Activated CD4-positive, alpha-beta T cell treated with anti-CD3 and anti-CD28 coated beads for 36 hours (primary cell): ENCODE measurements at regions of chr10 and their contacts with region 1.

Region 1: GRCh38 chr10:69957886-69958555 is 94.6 kb upstream of the MACROH2A2 start:
- DNase-seq: peak; percentile 34
- ATAC-seq: peak; percentile 72
- H3K4me3 Mint-ChIP-seq: no peak overlapping the region
- H3K27ac Mint-ChIP-seq: no peak overlapping the region
- H3K4me1 Mint-ChIP-seq: no peaks in the 10 kb centered on the region
- H3K27me3 Mint-ChIP-seq: peaks cover 3% of the 10 kb centered on the region

Region 2: GRCh38 chr10:69639291-69640195 is 318.5 kb before region 1 on chr10:
- CTCF ChIA-PET with region 1: no interaction called
- POLR2A ChIA-PET with region 1: no interaction called
- intact Hi-C with region 1: loop called in 1 of 2 experiments (anchors 5 kb)
- DNase-seq: peak; percentile 81
- ATAC-seq: peak; percentile 76
- H3K4me3 Mint-ChIP-seq: no peak overlapping the region
- H3K27ac Mint-ChIP-seq: no peak overlapping the region
- H3K4me1 Mint-ChIP-seq: no peaks in the 10 kb centered on the region
- H3K27me3 Mint-ChIP-seq: no peaks in the 10 kb centered on the region

Region 3: GRCh38 chr10:69974551-69975155 is 16.6 kb after region 1 on chr10:
- CTCF ChIA-PET with region 1: interaction called, 31 read pairs
- POLR2A ChIA-PET with region 1: no interaction called
- intact Hi-C with region 1: no loop called
- DNase-seq: no peak
- ATAC-seq: no peak
- H3K4me3 Mint-ChIP-seq: no peak overlapping the region
- H3K27ac Mint-ChIP-seq: no peak overlapping the region
- H3K4me1 Mint-ChIP-seq: no peaks in the 10 kb centered on the region
- H3K27me3 Mint-ChIP-seq: peaks cover 26% of the 10 kb centered on the region

Region 4: DNA sequence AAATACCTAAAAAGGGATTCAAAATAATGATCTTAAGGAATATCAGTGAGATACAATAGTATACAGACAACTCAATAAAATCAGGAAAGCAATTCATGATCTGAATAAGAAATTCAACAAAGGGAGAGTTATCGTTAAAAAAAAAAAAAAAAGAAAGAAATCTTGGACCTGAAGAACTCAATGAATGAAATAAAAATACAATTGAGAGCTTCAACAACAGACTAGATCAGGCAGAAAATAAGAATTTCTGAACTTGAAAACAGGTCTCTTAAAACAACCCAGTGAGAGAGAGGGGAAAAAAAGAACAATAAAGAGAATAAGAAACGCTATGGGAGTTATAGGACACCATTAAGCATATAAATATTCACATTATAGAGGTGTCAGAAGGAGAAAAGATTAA is 22.7 kb after region 1 on chr10:
- CTCF ChIA-PET with region 1: interaction called, 31 read pairs
- POLR2A ChIA-PET with region 1: no interaction called
- intact Hi-C with region 1: no loop called
- DNase-seq: no peak
- ATAC-seq: no peak
- H3K4me3 Mint-ChIP-seq: no peak overlapping the region
- H3K27ac Mint-ChIP-seq: no peak overlapping the region
- H3K4me1 Mint-ChIP-seq: no peaks in the 10 kb centered on the region
- H3K27me3 Mint-ChIP-seq: peaks cover 27% of the 10 kb centered on the region

Region 5: DNA sequence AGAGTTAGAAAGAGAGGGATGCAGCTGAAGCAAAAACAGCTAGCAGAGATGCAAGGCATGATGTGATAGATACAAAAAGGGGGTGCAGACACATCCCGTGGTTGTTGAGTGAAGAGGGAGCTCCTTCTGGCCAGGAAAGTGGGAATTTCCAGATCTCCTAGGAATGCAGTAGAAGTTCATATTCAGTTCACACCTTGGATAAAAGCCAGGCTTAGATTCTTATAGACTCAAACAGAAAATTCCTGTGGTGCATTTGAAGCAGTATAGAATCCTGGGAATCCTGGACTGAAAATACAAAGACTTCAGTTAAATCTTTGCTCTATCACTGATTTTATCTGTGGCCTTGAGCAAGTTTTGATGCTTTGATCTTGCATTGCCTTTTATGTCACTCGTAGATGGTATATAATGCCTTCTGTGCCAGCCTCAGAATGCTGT is 891.6 kb after region 1 on chr10:
- CTCF ChIA-PET with region 1: no interaction called
- POLR2A ChIA-PET with region 1: no interaction called
- intact Hi-C with region 1: no loop called
- DNase-seq: no peak
- ATAC-seq: no peak
- H3K4me3 Mint-ChIP-seq: no peak overlapping the region
- H3K27ac Mint-ChIP-seq: no peak overlapping the region
- H3K4me1 Mint-ChIP-seq: peaks cover 42% of the 10 kb centered on the region
- H3K27me3 Mint-ChIP-seq: no peaks in the 10 kb centered on the region